Activated CD4-positive, alpha-beta T cell treated with anti-CD3 and anti-CD28 coated beads for 36 hours (primary cell): ENCODE measurements at regions of chr10 and their contacts with region 1.

Region 1: DNA sequence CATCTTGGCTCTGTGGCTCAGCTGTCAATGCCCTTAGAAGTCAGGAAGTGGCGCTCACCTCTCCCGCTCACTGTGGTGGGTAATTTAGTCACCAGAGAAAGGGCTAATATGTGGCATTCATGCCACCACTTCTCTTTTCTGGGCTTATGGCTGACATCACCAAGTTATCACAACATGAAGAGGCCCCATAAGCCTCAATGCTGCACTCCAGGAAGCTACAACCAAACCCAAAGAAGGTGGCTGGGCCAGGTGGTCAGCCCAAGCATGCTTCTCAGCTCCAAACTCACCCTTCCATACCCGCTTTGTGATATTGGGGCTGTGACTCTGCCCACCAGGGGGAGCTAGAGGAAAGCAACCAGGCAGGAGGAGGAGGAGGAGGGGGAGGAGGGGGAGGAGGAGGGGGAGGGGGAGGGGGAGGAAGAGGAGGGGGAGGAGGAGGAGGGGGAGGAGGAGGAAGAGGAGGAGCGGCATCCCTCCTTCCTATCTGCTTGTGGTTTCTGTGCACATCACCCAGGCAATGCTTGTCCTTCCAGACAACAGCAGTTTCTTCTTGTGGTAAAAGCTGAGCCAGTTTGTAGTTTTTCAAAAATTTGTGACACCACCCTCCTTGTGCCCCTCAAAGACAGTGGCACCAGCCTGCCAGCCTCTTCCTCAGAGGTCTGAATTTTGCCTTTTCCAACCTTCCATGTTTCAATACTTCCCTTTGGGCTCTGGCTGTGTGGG is 42.1 kb downstream of the CYP26A1 start:
- DNase-seq: peak; percentile 85
- ATAC-seq: peak; percentile 83
- H3K4me3 Mint-ChIP-seq: no peak overlapping the region
- H3K27ac Mint-ChIP-seq: no peak overlapping the region
- H3K4me1 Mint-ChIP-seq: peaks cover 11% of the 10 kb centered on the region
- H3K27me3 Mint-ChIP-seq: peaks cover 5% of the 10 kb centered on the region

Region 2: DNA sequence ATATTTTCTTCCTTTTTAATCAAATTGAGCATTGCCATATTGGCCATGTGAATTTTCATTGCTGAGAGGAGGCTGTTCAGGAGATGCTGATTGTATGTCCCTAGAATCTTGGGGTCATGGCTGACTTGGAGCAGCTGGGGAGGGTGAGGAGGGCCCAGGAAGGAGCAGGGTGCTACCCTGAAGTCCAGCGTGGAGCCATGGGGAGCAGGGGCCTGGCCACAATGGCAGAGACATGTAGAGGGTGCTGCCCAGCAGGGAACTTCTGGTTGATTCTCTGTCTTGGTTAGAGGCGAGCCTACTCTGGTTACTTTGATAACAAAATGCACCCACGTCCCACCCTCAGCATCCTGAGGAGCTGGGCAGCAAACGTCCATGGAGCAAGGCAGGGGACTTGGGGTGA is 180.3 kb after region 1 on chr10:
- CTCF ChIA-PET with region 1: interaction called, 10 read pairs
- POLR2A ChIA-PET with region 1: no interaction called
- intact Hi-C with region 1: no loop called
- DNase-seq: no peak
- ATAC-seq: no peak
- H3K4me3 Mint-ChIP-seq: no peak overlapping the region
- H3K27ac Mint-ChIP-seq: no peak overlapping the region
- H3K4me1 Mint-ChIP-seq: peaks cover 2% of the 10 kb centered on the region
- H3K27me3 Mint-ChIP-seq: peaks cover 4% of the 10 kb centered on the region

Region 3: DNA sequence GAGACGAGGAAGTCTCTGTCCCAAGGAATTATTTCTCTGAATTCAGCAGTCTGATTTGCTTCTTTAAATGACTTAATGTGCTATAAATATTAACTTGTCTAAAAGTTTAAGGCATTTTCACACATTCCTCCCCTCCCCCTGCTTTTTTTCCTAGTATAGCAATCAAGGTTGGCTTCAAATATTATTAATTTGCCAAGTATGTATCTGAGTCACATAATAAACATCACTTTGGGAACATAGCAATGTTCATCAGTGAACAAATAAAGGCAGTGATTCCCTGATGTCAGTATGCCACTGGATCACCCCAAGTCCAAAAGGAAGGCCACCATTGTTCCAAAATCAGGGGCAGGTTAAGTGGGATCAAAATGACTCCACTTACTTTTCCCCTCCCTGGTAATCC is 537.0 kb after region 1 on chr10:
- CTCF ChIA-PET with region 1: no interaction called
- POLR2A ChIA-PET with region 1: no interaction called
- intact Hi-C with region 1: no loop called
- DNase-seq: no peak
- ATAC-seq: no peak
- H3K4me3 Mint-ChIP-seq: no peak overlapping the region
- H3K27ac Mint-ChIP-seq: no peak overlapping the region
- H3K4me1 Mint-ChIP-seq: no peaks in the 10 kb centered on the region
- H3K27me3 Mint-ChIP-seq: no peaks in the 10 kb centered on the region